Activated CD4-positive, alpha-beta memory T cell treated with anti-CD3 and anti-CD28 coated beads for 36 hours (primary cell): ENCODE measurements at regions of chr2 and their contacts with region 1.

Region 1: GRCh38 chr2:27428213-27428977 is at the start of gene NRBP1:
- DNase-seq: peak; percentile 94
- H3K4me3 Mint-ChIP-seq: peak within 1 kb of the TSS; percentile 99
- H3K27ac Mint-ChIP-seq: peak within 1 kb of the TSS; percentile 98
- H3K4me1 Mint-ChIP-seq: peaks cover 35% of the 10 kb centered on the region
- H3K27me3 Mint-ChIP-seq: no peaks in the 10 kb centered on the region
- total RNA-seq, gene NRBP1: 80.8 to 82.7 TPM

Region 2: DNA sequence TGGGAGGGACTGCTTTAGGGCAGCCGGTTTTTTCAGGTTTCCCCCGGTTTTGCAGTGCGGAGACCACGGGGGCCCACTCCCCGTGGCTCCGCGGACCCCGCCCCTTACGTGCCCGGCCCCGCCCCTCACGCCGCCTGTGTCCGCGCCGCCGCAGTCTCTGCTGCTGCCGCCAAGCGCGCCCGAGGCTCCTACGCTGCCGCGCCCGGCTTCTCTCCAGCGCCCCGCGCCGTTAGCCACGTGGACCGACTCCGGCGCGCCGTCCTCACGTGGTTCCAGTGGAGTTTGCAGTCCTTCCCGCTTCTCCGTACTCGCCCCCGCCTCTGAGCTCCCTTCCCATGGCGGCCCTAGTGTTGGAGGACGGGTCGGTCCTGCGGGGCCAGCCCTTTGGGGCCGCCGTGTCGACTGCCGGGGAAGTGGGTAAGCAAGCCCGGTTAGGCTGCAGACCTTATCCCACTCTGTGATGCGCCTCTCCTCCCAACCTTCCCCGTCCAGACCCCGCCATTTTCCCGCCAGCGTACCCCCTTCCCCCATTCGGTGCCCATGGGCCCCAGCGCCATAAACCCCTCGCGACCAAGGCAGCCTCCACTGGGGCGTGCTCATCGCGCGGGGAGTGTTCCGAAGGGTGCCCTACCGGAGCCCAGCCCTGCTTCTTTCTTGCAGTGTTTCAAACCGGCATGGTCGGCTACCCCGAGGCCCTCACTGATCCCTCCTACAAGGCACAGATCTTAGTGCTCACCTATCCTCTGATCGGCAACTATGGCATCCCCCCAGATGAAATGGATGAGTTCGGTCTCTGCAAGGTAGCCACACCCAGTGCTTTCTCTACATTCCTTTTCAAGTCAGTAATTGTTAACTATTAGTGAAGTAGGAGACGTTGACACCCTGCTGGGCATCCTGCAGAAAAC is 210.9 kb before region 1 on chr2 and contains the start of gene CAD:
- CTCF ChIA-PET with region 1: no interaction called
- POLR2A ChIA-PET with region 1: no interaction called
- intact Hi-C with region 1: loop called (anchors 10 kb)
- DNase-seq: peak; percentile 91
- H3K4me3 Mint-ChIP-seq: peak within 1 kb of the TSS; percentile 93
- H3K27ac Mint-ChIP-seq: peak within 1 kb of the TSS; percentile 89
- H3K4me1 Mint-ChIP-seq: peaks cover 47% of the 10 kb centered on the region
- H3K27me3 Mint-ChIP-seq: no peaks in the 10 kb centered on the region
- total RNA-seq, gene CAD: 99.7 to 102 TPM

Region 3: GRCh38 chr2:27356382-27357181 is 71.8 kb before region 1 on chr2 and contains the start of gene GTF3C2:
- CTCF ChIA-PET with region 1: interaction called, 4 read pairs
- POLR2A ChIA-PET with region 1: interaction called, 6 read pairs
- intact Hi-C with region 1: loop called (anchors 1 kb)
- DNase-seq: peak; percentile 96
- H3K4me3 Mint-ChIP-seq: peak within 1 kb of the TSS; percentile 98
- H3K27ac Mint-ChIP-seq: peak within 1 kb of the TSS; percentile 99
- H3K4me1 Mint-ChIP-seq: peaks cover 51% of the 10 kb centered on the region
- H3K27me3 Mint-ChIP-seq: no peaks in the 10 kb centered on the region
- total RNA-seq, gene GTF3C2: 55.2 to 64.5 TPM

Region 4: GRCh38 chr2:27380626-27381545 is 47.5 kb before region 1 on chr2 and contains the start of gene ZNF513:
- CTCF ChIA-PET with region 1: interaction called, 5 read pairs
- POLR2A ChIA-PET with region 1: interaction called, 6 read pairs
- intact Hi-C with region 1: loop called (anchors 2 kb)
- DNase-seq: peak; percentile 94
- H3K4me3 Mint-ChIP-seq: peak within 1 kb of the TSS; percentile 90
- H3K27ac Mint-ChIP-seq: peak within 1 kb of the TSS; percentile 80
- H3K4me1 Mint-ChIP-seq: peaks cover 22% of the 10 kb centered on the region
- H3K27me3 Mint-ChIP-seq: no peaks in the 10 kb centered on the region
- total RNA-seq, gene ZNF513: 8.6 to 9.7 TPM

Region 5: DNA sequence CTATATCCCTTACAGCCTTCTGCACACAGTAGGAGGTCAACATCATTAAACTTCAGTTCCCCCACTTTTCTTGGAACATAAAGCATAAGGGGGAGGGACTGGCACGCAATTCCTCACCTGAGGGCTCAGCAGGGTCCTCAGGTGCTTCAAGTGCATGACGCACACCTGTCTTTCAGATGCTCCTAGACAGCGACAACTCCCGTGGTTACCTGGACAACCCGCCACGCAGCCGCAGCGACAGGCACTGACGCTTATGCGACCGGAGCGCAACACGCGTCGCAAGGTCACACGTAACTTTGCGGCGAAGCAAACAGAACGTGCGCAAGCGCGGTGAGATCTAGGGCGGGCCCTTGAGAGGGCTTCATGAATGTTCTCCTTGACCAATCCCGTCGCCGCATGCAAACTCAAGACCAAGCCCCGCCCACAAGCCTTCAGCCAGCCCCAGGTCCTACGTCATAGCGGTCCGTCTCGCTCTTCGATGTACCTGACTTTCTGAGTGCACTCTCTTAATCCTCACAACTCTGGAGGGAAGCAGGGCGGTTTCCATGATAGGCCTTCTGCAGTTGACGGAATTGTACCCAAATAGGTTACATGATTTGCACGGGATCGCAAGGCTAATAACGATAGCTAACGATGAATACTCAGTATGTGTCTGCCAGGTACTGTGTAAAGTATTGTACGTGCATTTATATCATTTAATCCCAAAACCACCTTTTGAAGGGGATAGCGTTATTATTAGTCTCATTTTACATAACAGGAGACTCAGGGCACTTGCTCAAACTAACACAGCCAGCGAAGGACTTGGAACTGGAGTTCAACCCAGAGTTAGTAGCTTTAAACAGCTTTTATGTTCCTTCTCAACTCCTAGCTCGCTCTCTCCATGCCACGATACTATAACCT is 61.4 kb after region 1 on chr2 and contains the start of gene IFT172:
- CTCF ChIA-PET with region 1: no interaction called
- POLR2A ChIA-PET with region 1: interaction called, 4 read pairs
- intact Hi-C with region 1: loop called (anchors 1 kb)
- DNase-seq: peak; percentile 100
- H3K4me3 Mint-ChIP-seq: peak within 1 kb of the TSS; percentile 88
- H3K27ac Mint-ChIP-seq: peak within 1 kb of the TSS; percentile 76
- H3K4me1 Mint-ChIP-seq: peaks cover 31% of the 10 kb centered on the region
- H3K27me3 Mint-ChIP-seq: peaks cover 14% of the 10 kb centered on the region
- total RNA-seq, gene IFT172: 7.7 to 8.2 TPM

Region 6: GRCh38 chr2:27628767-27629709 is 200.6 kb after region 1 on chr2 and contains the starts of genes CCDC121 and GPN1:
- CTCF ChIA-PET with region 1: no interaction called
- POLR2A ChIA-PET with region 1: interaction called, 3 read pairs
- intact Hi-C with region 1: loop called (anchors 2 kb)
- DNase-seq: peak; percentile 98
- H3K4me3 Mint-ChIP-seq: no peak within 1 kb of the TSS
- H3K27ac Mint-ChIP-seq: no peak within 1 kb of the TSS
- H3K4me1 Mint-ChIP-seq: peaks cover 35% of the 10 kb centered on the region
- H3K27me3 Mint-ChIP-seq: no peaks in the 10 kb centered on the region
- total RNA-seq, gene CCDC121: 0.34 to 0.36 TPM
- total RNA-seq, gene GPN1: 54.4 to 56.8 TPM

Region 7: DNA sequence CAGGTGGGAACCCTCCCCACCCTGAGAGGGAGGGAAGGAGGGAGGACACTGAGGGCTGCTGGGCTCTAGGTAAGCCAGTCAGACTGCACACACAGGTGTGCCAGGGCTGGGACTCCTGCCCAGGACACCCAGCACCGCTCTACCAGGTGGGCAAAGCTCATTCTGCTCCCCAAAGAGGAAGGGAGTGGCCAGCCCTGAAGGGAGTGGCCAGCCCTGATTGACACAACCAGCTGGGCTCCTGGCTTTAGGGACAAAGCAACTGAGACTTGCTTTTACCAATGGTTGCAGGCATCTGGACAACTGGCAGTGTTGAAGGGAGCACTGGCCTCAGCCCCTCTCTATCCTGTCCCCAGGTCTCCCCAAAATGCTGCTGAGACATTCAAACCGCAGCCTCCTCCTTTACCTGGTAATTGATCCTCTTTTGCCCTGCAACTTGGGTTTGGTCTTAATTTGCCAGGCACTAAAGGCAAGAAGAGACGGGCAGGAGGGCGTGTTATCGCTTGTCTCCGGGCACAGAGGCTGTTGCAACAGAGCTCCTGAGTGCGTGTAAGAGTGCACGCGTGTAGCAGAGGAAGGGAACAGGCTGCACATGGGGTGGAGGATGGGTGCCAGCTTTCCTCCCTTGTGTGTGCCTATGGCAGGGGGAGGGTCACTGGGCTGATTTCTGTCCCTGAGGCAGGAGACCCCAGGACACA is 949.7 kb after region 1 on chr2:
- CTCF ChIA-PET with region 1: no interaction called
- POLR2A ChIA-PET with region 1: no interaction called
- intact Hi-C with region 1: no loop called
- DNase-seq: no peak
- H3K4me3 Mint-ChIP-seq: no peak overlapping the region
- H3K27ac Mint-ChIP-seq: no peak overlapping the region
- H3K4me1 Mint-ChIP-seq: peaks cover 26% of the 10 kb centered on the region
- H3K27me3 Mint-ChIP-seq: no peaks in the 10 kb centered on the region